ENCODE measurements at regions of chr11 and their contacts with region 1.

Region 1: DNA sequence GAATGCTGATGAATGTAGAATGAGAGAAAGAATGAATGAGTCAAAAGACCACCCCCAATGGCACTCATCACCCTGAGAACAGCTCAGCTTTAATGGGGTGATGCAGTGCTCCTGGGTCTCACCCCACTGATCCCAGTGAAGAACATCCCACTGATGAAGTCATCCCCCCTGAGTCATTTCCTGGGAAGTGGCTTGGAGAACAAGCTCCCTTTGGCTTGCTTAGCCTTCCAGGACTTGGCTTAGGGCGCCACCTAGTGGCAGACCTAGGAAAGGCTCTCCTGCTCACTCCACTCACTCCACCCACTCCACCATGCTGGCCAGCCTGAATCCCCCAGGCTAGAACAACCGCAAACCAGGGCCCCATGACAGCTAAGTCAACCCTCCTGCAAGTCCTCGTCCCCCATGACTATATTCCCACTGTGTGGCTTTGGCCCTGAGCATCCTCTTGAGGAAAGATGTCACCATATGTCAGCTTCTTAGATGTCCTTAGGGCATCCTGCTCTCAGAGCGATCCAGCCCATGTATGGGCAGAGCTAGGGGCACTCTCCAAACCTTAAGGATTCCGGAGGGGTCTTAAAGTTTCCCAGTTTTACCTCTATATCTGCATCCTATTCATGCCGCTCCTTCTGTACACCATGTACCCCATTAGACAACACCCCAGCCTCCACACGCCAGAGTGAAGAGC is 17.8 kb upstream of the TMPRSS13 start:
- DNase-seq: peak; percentile 91
- H3K4me3 Mint-ChIP-seq: no peak overlapping the region
- H3K27ac Mint-ChIP-seq: no peak overlapping the region
- H3K4me1 Mint-ChIP-seq: peaks cover 68% of the 10 kb centered on the region
- H3K27me3 Mint-ChIP-seq: no peaks in the 10 kb centered on the region

Region 2: GRCh38 chr11:117807482-117808327 is 139.3 kb before region 1 on chr11:
- CTCF ChIA-PET with region 1: interaction called, 58 read pairs
- intact Hi-C with region 1: no loop called
- DNase-seq: peak; percentile 87
- H3K4me3 Mint-ChIP-seq: no peak overlapping the region
- H3K27ac Mint-ChIP-seq: no peak overlapping the region
- H3K4me1 Mint-ChIP-seq: peaks cover 13% of the 10 kb centered on the region
- H3K27me3 Mint-ChIP-seq: no peaks in the 10 kb centered on the region

Region 3: DNA sequence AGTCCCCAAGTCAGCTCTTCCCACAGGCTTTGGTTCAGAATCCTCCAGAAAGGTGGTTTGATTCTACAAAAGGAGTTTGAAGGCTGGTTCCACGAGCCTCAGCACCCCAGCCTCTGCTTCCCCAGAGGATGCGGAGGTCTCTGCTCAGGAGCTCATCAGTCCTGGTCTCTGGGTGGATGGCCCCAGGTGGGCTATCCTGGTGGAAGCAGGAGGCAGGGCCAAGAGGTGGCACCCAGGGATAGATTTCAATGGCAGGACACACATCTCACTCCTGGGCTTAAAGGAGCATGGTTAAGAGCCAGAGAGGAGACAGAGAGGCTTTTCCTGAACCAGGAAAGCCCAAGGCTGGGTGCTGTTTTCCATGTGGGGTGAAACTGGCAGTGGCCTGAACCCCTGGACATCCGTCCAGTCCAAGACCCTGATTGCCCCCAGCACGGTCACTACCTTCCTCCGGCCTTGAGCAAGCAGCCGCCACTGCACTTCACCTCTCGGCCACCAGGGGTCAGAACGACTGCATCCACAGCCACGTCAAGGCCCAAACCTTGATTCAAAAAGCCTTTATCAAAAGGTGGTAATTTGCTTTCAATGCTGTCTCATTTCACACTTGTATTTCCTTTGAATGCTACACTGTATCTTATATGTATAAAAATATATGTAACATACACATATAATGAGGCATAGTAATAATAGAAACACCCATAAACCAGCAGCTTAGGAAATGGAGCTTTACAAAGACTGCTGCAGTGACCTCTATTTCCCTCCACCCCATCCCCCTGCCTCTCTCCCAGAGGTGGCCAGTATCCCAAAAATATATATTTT is 103.1 kb before region 1 on chr11:
- CTCF ChIA-PET with region 1: interaction called, 147 read pairs
- intact Hi-C with region 1: loop called (anchors 1 kb)
- DNase-seq: peak; percentile 90
- H3K4me3 Mint-ChIP-seq: no peak overlapping the region
- H3K27ac Mint-ChIP-seq: no peak overlapping the region
- H3K4me1 Mint-ChIP-seq: no peaks in the 10 kb centered on the region
- H3K27me3 Mint-ChIP-seq: no peaks in the 10 kb centered on the region

Region 4: DNA sequence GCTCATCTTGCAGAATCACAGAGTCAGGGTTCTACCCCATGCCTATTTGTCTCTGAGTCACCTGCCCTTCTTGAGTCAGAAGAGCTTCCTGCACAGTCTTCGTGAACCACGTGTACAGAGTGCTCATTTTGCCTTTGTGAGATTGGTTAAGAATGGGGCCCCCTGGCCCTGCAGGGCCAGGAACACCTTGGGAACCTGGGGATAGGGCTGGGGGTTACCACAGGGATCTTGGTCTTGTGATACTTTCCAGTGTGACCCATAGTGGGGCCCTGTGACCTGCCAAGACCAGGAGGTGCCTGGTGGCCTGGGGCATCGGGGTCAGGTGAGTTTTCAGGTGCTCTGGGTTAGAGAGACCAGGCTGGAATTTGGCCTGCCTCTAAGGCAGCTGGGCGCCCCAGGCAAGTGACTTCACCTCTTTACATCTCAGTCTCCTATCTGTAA is 27.2 kb before region 1 on chr11:
- CTCF ChIA-PET with region 1: interaction called, 12 read pairs
- intact Hi-C with region 1: no loop called
- DNase-seq: peak; percentile 45
- H3K4me3 Mint-ChIP-seq: no peak overlapping the region
- H3K27ac Mint-ChIP-seq: no peak overlapping the region
- H3K4me1 Mint-ChIP-seq: peaks cover 8% of the 10 kb centered on the region
- H3K27me3 Mint-ChIP-seq: no peaks in the 10 kb centered on the region

Region 5: DNA sequence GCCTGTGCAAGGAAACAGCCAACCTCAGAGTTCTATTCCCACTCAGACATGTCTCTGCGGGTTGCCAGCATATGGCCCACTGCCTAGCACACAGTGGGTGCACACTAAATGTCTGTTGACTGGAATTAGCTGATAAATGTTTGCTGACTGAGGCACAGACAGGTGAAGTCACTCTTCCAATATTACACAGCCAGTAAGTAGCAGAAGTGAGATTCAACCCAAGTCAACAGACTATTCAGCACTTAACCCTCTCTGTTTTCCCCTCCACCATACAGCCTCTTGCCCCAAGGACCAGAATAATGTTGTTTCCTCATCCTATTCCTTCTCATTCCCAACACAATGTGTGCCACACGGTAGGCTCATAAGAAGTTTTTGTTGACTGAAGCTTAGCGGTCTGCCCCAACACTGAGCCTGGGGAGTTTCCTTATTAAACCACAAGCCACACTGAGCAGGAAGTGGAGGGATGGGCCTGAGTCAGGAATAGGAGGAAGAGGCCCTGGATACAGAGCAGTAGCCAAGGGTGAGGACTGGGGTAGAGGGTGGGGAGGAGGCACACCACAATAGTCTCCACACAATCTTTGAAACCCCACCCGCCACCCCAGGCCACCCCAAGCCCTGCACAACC is 23.5 kb after region 1 on chr11:
- CTCF ChIA-PET with region 1: interaction called, 14 read pairs
- intact Hi-C with region 1: no loop called
- DNase-seq: peak; percentile 71
- H3K4me3 Mint-ChIP-seq: peak overlapping the region; percentile 2
- H3K27ac Mint-ChIP-seq: peak overlapping the region; percentile 48
- H3K4me1 Mint-ChIP-seq: peaks cover 56% of the 10 kb centered on the region
- H3K27me3 Mint-ChIP-seq: no peaks in the 10 kb centered on the region

Region 6: DNA sequence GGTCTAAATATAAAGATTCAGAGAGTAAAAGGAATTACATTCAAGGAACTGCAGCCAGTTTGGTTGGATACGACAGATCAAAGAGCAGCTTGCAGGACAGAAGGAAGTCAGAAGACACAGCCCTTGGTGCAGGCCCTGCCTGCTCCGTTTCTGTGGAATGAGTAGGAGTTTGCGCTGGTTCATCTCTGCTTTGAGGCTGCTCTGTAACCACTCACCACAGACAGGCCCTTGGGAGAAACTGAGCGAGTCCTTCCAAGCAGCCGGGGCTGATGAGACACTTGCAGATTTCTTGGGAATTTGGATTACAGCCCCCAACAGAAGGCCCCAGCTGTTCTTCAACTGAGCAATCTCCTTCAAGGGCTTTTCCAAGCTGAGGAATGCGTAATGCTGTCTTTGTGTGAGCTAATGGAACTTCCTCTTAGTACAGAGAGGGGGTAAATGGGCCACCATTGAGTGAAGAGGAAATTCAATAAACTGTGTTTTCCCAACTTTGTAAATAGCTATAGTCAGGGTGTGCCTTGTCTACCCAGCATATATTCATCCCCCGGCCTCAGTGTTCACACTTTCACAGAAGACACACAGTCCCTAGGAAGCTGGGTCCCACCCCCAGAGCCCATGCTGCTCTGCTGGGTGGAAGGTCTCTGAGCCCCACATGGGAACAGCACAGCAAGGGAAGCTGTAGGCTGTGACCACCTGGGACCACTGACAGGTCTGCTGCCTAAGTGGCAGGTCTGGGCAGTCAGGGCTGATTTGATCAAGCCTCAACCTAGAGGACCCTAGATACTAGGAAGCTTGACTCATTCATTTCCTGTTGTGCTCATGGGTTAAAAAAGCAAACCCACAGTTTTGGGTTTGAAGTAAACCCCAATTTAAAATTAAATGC is 55.8 kb after region 1 on chr11:
- CTCF ChIA-PET with region 1: interaction called, 26 read pairs
- intact Hi-C with region 1: loop called (anchors 1 kb)
- DNase-seq: peak; percentile 73
- H3K4me3 Mint-ChIP-seq: no peak overlapping the region
- H3K27ac Mint-ChIP-seq: peak overlapping the region; percentile 80
- H3K4me1 Mint-ChIP-seq: peaks cover 68% of the 10 kb centered on the region
- H3K27me3 Mint-ChIP-seq: no peaks in the 10 kb centered on the region

Region 7: GRCh38 chr11:118171269-118172062 is 224.5 kb after region 1 on chr11:
- CTCF ChIA-PET with region 1: interaction called, 6 read pairs
- intact Hi-C with region 1: loop called (anchors 10 kb)
- DNase-seq: peak; percentile 84
- H3K4me3 Mint-ChIP-seq: no peak overlapping the region
- H3K27ac Mint-ChIP-seq: no peak overlapping the region
- H3K4me1 Mint-ChIP-seq: peaks cover 2% of the 10 kb centered on the region
- H3K27me3 Mint-ChIP-seq: peaks cover 2% of the 10 kb centered on the region

Measured in activated naive CD4-positive, alpha-beta T cell treated with anti-CD3 and anti-CD28 coated beads for 36 hours (primary cell).